ENCODE measurements at regions of chr10 and their contacts with region 1.

Region 1: GRCh38 chr10:94279835-94280709 is 82.7 kb downstream of the NOC3L start:
- DNase-seq: peak in 8 of 9 experiments; percentile 25 to 61 (median 52)
- ATAC-seq: no peak
- H3K4me3 ChIP-seq: no peak overlapping the region
- H3K4me3 Mint-ChIP-seq: no peak overlapping the region
- H3K27ac ChIP-seq: no peak overlapping the region
- H3K27ac Mint-ChIP-seq: no peak overlapping the region
- H3K4me1 ChIP-seq: no peaks in the 10 kb centered on the region
- H3K4me1 Mint-ChIP-seq: peaks cover 6% of the 10 kb centered on the region
- H3K27me3 ChIP-seq: no peaks in the 10 kb centered on the region
- H3K27me3 Mint-ChIP-seq: peaks cover 23% of the 10 kb centered on the region
- CTCF ChIP-seq: peak; percentile 91

Region 2: DNA sequence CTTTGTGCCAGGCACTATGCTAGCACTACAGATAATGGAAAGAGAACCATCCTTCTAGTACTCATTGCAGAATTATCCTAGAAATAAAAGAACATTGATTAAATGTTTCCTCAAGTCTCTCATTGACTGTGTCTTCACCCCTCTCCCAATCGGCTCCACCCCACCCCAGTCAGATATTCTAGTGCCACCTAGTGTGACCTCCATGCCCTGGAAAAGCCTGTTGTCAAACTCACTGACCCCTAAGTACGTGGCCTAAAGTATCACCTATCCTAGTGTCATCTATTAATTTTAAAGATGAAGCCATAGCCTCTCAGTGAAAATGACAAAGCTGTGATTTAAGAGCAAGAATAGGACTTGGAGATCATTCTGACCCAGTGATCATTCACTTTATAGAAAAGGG is 496.0 kb before region 1 on chr10:
- CTCF ChIA-PET with region 1: no interaction called
- POLR2A ChIA-PET with region 1: no interaction called
- intact Hi-C with region 1: no loop called
- DNase-seq: no peak
- ATAC-seq: no peak
- H3K4me3 ChIP-seq: no peak overlapping the region
- H3K4me3 Mint-ChIP-seq: no peak overlapping the region
- H3K27ac ChIP-seq: no peak overlapping the region
- H3K27ac Mint-ChIP-seq: no peak overlapping the region
- H3K4me1 ChIP-seq: no peaks in the 10 kb centered on the region
- H3K4me1 Mint-ChIP-seq: no peaks in the 10 kb centered on the region
- H3K27me3 ChIP-seq: no peaks in the 10 kb centered on the region
- H3K27me3 Mint-ChIP-seq: peaks cover 3% of the 10 kb centered on the region
- CTCF ChIP-seq: no peak

Region 3: GRCh38 chr10:94439275-94439861 is 159.3 kb after region 1 on chr10:
- CTCF ChIA-PET with region 1: interaction called, 5 read pairs
- POLR2A ChIA-PET with region 1: no interaction called
- intact Hi-C with region 1: loop called in 1 of 2 experiments (anchors 1 kb)
- DNase-seq: no peak
- ATAC-seq: no peak
- H3K4me3 ChIP-seq: no peak overlapping the region
- H3K4me3 Mint-ChIP-seq: no peak overlapping the region
- H3K27ac ChIP-seq: no peak overlapping the region
- H3K27ac Mint-ChIP-seq: no peak overlapping the region
- H3K4me1 ChIP-seq: no peaks in the 10 kb centered on the region
- H3K4me1 Mint-ChIP-seq: no peaks in the 10 kb centered on the region
- H3K27me3 ChIP-seq: peaks cover 0 to 6% of the 10 kb centered on the region in 2 experiments
- H3K27me3 Mint-ChIP-seq: peaks cover 27% of the 10 kb centered on the region
- CTCF ChIP-seq: no peak

Measured in CD8-positive, alpha-beta T cell (primary cell).